Aorta (tissue), 5 donors: ENCODE measurements at regions of chrX and their contacts with region 1.

Region 1: DNA sequence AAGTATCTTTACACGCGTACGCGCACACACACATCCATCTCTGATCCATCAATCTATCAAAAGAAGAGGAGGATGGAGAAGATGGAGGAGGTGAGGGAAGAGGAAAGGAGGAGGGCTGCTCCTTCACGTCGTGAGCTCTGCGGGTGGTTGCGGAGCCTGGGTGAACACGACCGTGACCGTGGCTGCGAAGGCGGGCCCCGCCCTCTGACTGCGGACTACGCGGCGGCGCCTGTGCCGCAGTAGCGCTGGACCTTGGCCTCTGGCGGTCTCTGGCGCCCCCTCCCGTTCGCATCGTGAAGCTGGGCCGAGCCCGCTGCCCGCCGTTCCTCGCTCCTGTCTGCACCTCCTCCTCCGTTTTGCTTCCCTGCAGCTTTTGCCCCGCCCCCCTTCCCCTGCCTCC is 37.7 kb upstream of the ARAF start:
- DNase-seq: peak; percentile 89 to 95
- ATAC-seq: peak; percentile 96
- H3K4me3 ChIP-seq: peak overlapping the region; percentile 11 to 69
- H3K27ac ChIP-seq: no peak overlapping the region
- H3K4me1 ChIP-seq: no peaks in the 10 kb centered on the region
- H3K27me3 ChIP-seq: no peaks in the 10 kb centered on the region

Region 2: GRCh38 chrX:47193475-47194193 is 329.7 kb before region 1 on chrX and contains the start of gene UBA1:
- intact Hi-C with region 1: loop called (anchors 2 kb)
- DNase-seq: peak; percentile 98
- ATAC-seq: peak; percentile 96
- H3K4me3 ChIP-seq: peak within 1 kb of the TSS; percentile 35 to 76
- H3K27ac ChIP-seq: peak within 1 kb of the TSS; percentile 10 to 90
- H3K4me1 ChIP-seq: peaks cover 0 to 3% of the 10 kb centered on the region in 2 donors
- H3K27me3 ChIP-seq: no peaks in the 10 kb centered on the region
- total RNA-seq, gene UBA1: 160 to 167 TPM

Region 3: GRCh38 chrX:47361538-47362511 is 161.5 kb before region 1 on chrX:
- intact Hi-C with region 1: loop called in 1 of 2 experiments (anchors 10 kb)
- DNase-seq: peak; percentile 85 to 90
- ATAC-seq: peak; percentile 93
- H3K4me3 ChIP-seq: no peak overlapping the region
- H3K27ac ChIP-seq: peak overlapping the region; percentile 22 to 78
- H3K4me1 ChIP-seq: no peaks in the 10 kb centered on the region
- H3K27me3 ChIP-seq: no peaks in the 10 kb centered on the region

Region 4: DNA sequence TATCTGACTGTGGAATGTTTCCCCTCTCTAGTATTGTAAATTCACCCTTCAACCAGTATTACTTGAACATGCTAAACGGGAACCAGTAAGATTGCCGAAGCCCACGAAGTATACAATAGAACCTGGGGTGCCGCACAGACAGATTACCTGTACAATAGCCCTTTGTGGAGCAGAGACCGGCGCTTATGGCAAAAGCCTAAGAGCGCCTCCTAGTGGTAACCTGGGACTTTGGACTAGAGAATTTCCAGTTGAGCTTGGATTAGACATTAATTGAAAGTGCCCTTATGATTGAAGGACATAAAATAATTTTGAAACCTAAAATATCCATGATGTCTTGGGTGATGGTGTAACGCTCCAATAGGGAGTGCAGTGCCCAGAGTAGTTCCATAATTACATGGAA is 138.8 kb before region 1 on chrX:
- intact Hi-C with region 1: loop called in 1 of 2 experiments (anchors 10 kb)
- DNase-seq: peak in 1 of 2 donors; percentile 63
- ATAC-seq: peak; percentile 70
- H3K4me3 ChIP-seq: no peak overlapping the region
- H3K27ac ChIP-seq: no peak overlapping the region
- H3K4me1 ChIP-seq: no peaks in the 10 kb centered on the region
- H3K27me3 ChIP-seq: no peaks in the 10 kb centered on the region